Activated CD4-positive, alpha-beta T cell treated with anti-CD3 and anti-CD28 coated beads for 36 hours (primary cell): ENCODE measurements at regions of chr5 and their contacts with region 1.

Region 1: DNA sequence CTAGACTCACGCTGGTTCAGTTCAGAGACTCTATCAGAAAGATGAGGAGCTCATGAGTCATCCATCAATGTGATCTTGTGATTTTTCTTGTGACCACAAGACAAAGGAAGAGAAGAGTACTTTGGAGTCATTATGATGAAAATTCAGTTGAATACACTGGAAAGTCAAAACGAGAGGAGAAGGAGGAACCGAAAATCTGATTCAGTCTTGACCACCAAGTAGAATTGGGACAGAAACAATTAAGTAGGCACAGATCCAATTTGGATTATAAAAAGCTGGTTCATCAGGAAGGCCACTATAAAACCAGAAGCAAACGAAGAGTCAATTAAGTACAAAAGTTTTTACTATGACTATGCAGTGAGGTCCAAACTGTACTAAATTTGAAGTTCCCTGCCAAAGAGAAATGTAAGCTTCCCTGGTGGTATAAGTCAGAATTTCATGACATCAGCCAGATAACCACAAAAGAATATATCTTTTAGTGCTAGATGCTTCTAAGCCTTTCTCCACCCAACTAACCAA is 90.9 kb downstream of the THBS4 start:
- DNase-seq: peak; percentile 33
- ATAC-seq: peak; percentile 92
- H3K4me3 Mint-ChIP-seq: peak overlapping the region; percentile 44
- H3K27ac Mint-ChIP-seq: peak overlapping the region; percentile 61
- H3K4me1 Mint-ChIP-seq: peaks cover 50% of the 10 kb centered on the region
- H3K27me3 Mint-ChIP-seq: no peaks in the 10 kb centered on the region

Region 2: GRCh38 chr5:79560771-79561524 is 565.1 kb before region 1 on chr5:
- CTCF ChIA-PET with region 1: no interaction called
- POLR2A ChIA-PET with region 1: no interaction called
- intact Hi-C with region 1: loop called in 1 of 2 experiments (anchors 1 kb)
- DNase-seq: peak; percentile 61
- ATAC-seq: peak; percentile 86
- H3K4me3 Mint-ChIP-seq: peak overlapping the region; percentile 34
- H3K27ac Mint-ChIP-seq: peak overlapping the region; percentile 99
- H3K4me1 Mint-ChIP-seq: peaks cover 44% of the 10 kb centered on the region
- H3K27me3 Mint-ChIP-seq: no peaks in the 10 kb centered on the region

Region 3: GRCh38 chr5:80033513-80033912 is 92.5 kb before region 1 on chr5:
- CTCF ChIA-PET with region 1: no interaction called
- POLR2A ChIA-PET with region 1: no interaction called
- intact Hi-C with region 1: loop called in 1 of 2 experiments (anchors 1 kb)
- DNase-seq: peak; percentile 42
- ATAC-seq: peak; percentile 91
- H3K4me3 Mint-ChIP-seq: no peak overlapping the region
- H3K27ac Mint-ChIP-seq: no peak overlapping the region
- H3K4me1 Mint-ChIP-seq: peaks cover 32% of the 10 kb centered on the region
- H3K27me3 Mint-ChIP-seq: peaks cover 35% of the 10 kb centered on the region

Region 4: GRCh38 chr5:80141147-80141671 is 15.2 kb after region 1 on chr5:
- CTCF ChIA-PET with region 1: interaction called, 20 read pairs
- POLR2A ChIA-PET with region 1: interaction called, 7 read pairs
- intact Hi-C with region 1: loop called (anchors 1 kb)
- DNase-seq: no peak
- ATAC-seq: no peak
- H3K4me3 Mint-ChIP-seq: peak overlapping the region; percentile 12
- H3K27ac Mint-ChIP-seq: peak overlapping the region; percentile 94
- H3K4me1 Mint-ChIP-seq: peaks cover 80% of the 10 kb centered on the region
- H3K27me3 Mint-ChIP-seq: no peaks in the 10 kb centered on the region

Region 5: DNA sequence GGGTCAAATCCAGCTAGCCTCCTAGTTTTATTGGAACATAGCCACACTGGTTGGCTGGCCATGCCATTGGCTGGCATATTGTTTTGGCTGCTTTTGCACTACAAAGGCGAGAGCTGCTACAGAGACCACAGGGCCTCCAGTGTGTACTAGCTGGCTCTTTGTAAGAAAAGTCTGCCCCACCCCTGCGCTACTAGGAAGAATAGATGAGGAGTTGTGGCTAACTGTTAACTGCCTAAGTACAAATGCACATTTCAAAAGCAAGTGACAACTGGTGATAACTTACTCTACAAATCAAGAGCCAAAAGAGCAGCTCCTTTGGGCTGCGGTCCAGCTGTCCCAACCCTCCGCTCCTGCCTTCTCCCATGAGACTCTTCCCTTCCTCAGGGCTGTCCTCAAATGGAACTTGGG is 66.0 kb after region 1 on chr5:
- CTCF ChIA-PET with region 1: interaction called, 5 read pairs
- POLR2A ChIA-PET with region 1: interaction called, 3 read pairs
- intact Hi-C with region 1: loop called in 1 of 2 experiments (anchors 1 kb)
- DNase-seq: peak; percentile 55
- ATAC-seq: peak; percentile 42
- H3K4me3 Mint-ChIP-seq: peak overlapping the region; percentile 47
- H3K27ac Mint-ChIP-seq: peak overlapping the region; percentile 99
- H3K4me1 Mint-ChIP-seq: peaks cover 84% of the 10 kb centered on the region
- H3K27me3 Mint-ChIP-seq: no peaks in the 10 kb centered on the region

Region 6: GRCh38 chr5:80246001-80246758 is 120.2 kb after region 1 on chr5:
- CTCF ChIA-PET with region 1: no interaction called
- POLR2A ChIA-PET with region 1: no interaction called
- intact Hi-C with region 1: loop called (anchors 2 to 5 kb)
- DNase-seq: no peak
- ATAC-seq: no peak
- H3K4me3 Mint-ChIP-seq: peak overlapping the region; percentile 41
- H3K27ac Mint-ChIP-seq: peak overlapping the region; percentile 72
- H3K4me1 Mint-ChIP-seq: peaks cover 62% of the 10 kb centered on the region
- H3K27me3 Mint-ChIP-seq: no peaks in the 10 kb centered on the region